ENCODE measurements at regions of chrX and their contacts with region 1.

Region 1: DNA sequence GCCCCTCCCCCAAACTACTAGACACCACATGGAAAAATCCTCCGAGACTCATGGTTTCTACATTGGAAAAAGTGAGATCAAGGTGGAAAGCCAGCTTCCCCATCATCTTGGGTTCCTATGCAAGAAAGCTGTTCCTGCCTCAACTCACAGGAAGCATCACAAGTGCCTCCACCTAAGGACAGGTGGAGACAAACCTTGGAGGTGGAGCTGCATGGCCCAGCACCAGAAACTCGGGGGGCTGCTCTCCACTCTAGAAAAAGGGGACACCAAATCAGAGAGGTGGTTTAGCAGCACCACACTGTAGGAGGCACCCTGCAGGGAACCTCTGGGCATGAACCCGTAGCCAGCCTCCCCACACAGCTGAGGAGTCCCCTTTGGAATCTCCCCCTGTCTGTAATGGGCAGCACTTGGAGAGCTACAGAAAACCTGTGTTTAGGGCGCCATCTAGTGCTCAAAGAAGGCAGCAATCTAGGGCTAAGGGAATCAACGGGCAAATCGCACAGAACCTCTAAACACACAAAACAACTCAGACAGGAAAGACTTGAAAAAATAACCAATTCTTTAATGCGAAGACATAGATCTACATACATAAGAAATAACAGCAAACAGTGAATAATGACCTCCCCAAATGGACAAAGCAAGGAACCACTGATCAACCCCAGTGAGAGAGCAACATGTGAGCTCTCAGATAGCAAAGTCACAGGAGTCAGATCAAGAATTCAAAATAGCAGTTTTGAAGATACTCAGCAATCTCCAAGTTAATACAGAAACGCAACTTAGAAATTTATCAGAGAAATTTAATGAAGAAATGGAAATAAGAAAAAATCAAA is 37.0 kb upstream of the ZBTB33 start:
- DNase-seq: peak; percentile 38 to 63
- H3K4me3 ChIP-seq: no peak overlapping the region
- H3K27ac ChIP-seq: no peak overlapping the region
- H3K4me1 ChIP-seq: no peaks in the 10 kb centered on the region
- H3K27me3 ChIP-seq: no peaks in the 10 kb centered on the region
- CTCF ChIP-seq: peak; percentile 89

Region 2: GRCh38 chrX:119981286-119982070 is 232.2 kb before region 1 on chrX:
- CTCF ChIA-PET with region 1: interaction called, 3 read pairs
- POLR2A ChIA-PET with region 1: no interaction called
- intact Hi-C with region 1: loop called (anchors 10 kb)
- DNase-seq: peak in 1 of 2 experiments; percentile 41
- H3K4me3 ChIP-seq: no peak overlapping the region
- H3K27ac ChIP-seq: no peak overlapping the region
- H3K4me1 ChIP-seq: no peaks in the 10 kb centered on the region
- H3K27me3 ChIP-seq: no peaks in the 10 kb centered on the region
- CTCF ChIP-seq: peak; percentile 61

Region 3: GRCh38 chrX:120090208-120090607 is 123.4 kb before region 1 on chrX:
- CTCF ChIA-PET with region 1: no interaction called
- POLR2A ChIA-PET with region 1: no interaction called
- intact Hi-C with region 1: loop called (anchors 10 kb)
- DNase-seq: no peak
- H3K4me3 ChIP-seq: no peak overlapping the region
- H3K27ac ChIP-seq: no peak overlapping the region
- H3K4me1 ChIP-seq: no peaks in the 10 kb centered on the region
- H3K27me3 ChIP-seq: no peaks in the 10 kb centered on the region
- CTCF ChIP-seq: no peak

Measured in PC-9 (cell line).